ENCODE measurements at regions of chr11 and their contacts with region 1.

Region 1: GRCh38 chr11:124837491-124837856 is 27.8 kb upstream of the ROBO3 start:
- DNase-seq: no peak
- H3K4me3 Mint-ChIP-seq: no peak overlapping the region
- H3K27ac Mint-ChIP-seq: no peak overlapping the region
- H3K4me1 Mint-ChIP-seq: peaks cover 9% of the 10 kb centered on the region
- H3K27me3 Mint-ChIP-seq: peaks cover 49% of the 10 kb centered on the region

Region 2: DNA sequence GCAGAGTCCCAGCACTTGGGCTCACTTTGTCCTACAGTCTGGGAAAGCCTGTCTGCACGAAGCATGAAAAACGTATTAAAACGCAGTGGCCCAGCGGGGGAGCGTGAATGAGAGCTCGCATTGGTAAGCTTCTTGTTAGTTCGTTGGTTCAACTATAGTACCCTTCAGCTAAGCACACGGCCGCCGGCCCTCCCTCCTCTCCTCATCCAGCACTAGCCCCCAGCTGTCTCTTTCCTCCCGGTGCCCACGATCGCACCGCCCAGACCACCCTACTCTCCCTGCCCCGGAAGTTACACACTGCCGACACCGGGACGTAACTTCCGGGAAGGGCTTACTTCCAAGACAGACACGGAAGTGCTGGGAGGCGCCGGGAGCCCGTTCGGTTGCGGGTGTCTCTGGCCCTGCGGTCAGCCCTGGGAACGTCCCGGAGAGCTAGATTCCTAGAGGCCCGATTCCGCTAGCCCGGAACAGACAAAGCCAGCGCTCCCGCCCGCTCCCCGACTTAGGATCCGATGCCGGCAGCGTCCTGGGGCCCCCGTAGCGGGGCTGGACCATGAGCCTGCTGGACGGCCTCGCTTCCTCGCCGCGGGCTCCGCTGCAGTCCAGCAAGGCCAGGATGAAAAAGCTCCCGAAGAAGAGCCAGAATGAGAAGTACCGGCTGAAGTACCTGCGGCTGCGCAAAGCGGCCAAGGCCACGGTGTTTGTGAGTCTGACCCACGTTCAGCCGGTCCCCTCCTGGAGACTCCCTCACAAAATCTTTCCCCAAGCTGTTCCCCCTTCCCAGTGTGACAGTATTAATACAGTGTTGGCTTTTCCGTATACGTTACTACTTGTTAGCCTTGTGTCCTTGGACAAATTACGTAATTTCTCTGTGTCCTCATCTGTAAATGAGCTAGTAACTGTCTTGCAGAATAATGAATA is 214.7 kb before region 1 on chr11 and contains the start of gene TBRG1:
- CTCF ChIA-PET with region 1: interaction called, 5 read pairs
- POLR2A ChIA-PET with region 1: no interaction called
- intact Hi-C with region 1: loop called (anchors 1 kb)
- DNase-seq: peak; percentile 87
- H3K4me3 Mint-ChIP-seq: peak within 1 kb of the TSS; percentile 85
- H3K27ac Mint-ChIP-seq: peak within 1 kb of the TSS; percentile 93
- H3K4me1 Mint-ChIP-seq: peaks cover 28% of the 10 kb centered on the region
- H3K27me3 Mint-ChIP-seq: peaks cover 2% of the 10 kb centered on the region
- total RNA-seq, gene TBRG1: 33.5 to 34.5 TPM

Region 3: DNA sequence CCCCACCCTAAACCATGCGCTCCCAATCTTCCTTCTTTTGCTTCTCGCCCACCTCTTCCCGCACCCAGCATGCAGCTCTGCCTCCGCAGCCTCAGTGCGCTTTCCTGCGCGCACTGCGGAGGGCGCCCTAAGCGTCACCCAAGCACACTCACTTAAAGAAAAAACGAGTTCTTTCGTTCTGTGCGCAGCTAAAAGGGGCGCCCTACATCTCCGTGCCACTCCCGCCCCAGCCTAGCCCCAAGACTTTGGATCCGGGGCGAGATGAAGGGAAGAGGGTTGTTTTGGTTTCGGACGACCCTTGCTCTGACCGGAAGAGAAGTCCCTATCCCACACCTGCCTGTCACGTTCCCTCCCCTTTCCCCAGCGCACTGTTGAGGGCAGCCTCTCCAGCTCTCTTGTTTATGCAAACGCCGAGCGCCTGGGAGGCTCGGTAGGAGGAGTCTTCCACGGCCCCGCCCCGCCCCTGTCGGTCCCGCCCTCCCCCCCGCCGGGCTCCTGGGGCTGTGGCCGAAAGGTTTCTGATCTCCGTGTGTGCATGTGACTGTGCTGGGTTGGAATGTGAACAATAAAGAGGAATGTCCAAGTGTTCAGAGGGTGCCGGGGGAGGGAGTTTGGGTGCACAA is 90.7 kb before region 1 on chr11:
- CTCF ChIA-PET with region 1: interaction called, 10 read pairs
- POLR2A ChIA-PET with region 1: no interaction called
- intact Hi-C with region 1: loop called (anchors 1 kb)
- DNase-seq: peak; percentile 85
- H3K4me3 Mint-ChIP-seq: peak overlapping the region; percentile 87
- H3K27ac Mint-ChIP-seq: peak overlapping the region; percentile 89
- H3K4me1 Mint-ChIP-seq: peaks cover 6% of the 10 kb centered on the region
- H3K27me3 Mint-ChIP-seq: no peaks in the 10 kb centered on the region

Region 4: GRCh38 chr11:124865921-124866583 is 28.6 kb after region 1 on chr11:
- CTCF ChIA-PET with region 1: interaction called, 27 read pairs
- POLR2A ChIA-PET with region 1: interaction called, 3 read pairs
- intact Hi-C with region 1: loop called (anchors 1 kb)
- DNase-seq: peak; percentile 68
- H3K4me3 Mint-ChIP-seq: no peak overlapping the region
- H3K27ac Mint-ChIP-seq: no peak overlapping the region
- H3K4me1 Mint-ChIP-seq: peaks cover 36% of the 10 kb centered on the region
- H3K27me3 Mint-ChIP-seq: peaks cover 77% of the 10 kb centered on the region

Region 5: GRCh38 chr11:124946735-124947141 is 109.3 kb after region 1 on chr11:
- CTCF ChIA-PET with region 1: no interaction called
- POLR2A ChIA-PET with region 1: no interaction called
- intact Hi-C with region 1: no loop called
- DNase-seq: no peak
- H3K4me3 Mint-ChIP-seq: no peak overlapping the region
- H3K27ac Mint-ChIP-seq: no peak overlapping the region
- H3K4me1 Mint-ChIP-seq: peaks cover 7% of the 10 kb centered on the region
- H3K27me3 Mint-ChIP-seq: no peaks in the 10 kb centered on the region